A549 (cell line): ENCODE measurements at regions of chr2 and their contacts with region 1.

Region 1: DNA sequence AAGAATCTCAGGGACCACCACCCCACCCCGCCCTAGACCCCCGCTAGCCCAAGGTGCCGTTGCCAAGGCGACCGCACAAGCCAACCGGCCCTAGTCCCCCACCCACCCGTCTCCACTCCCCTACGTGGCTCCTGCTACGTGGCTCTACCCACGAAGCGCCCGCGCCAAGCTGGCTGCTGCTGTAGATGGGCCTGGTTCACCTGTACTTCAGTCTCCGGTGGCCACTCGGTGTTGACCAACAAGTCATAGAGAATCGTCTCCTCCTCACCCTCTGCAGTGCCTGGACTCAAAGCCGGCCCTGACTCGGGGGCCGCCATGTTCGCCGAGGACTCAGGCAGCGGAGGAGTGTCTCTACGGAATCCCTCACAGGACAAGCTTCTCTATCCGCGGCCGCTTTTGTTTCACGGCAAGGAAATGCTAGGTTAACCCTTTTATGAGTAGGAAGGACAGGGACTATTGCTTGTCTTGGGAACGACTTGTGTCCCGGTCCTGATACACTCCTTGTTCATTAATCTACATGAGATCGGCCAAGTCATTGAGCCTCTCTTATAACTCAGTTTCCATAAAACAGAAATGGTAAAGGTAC is at the start of gene NBAS:
- DNase-seq: peak; percentile 82 to 92
- ATAC-seq: peak; percentile 92 to 95
- H3K4me3 ChIP-seq: peak within 1 kb of the TSS; percentile 64
- H3K27ac ChIP-seq: peak within 1 kb of the TSS; percentile 76 to 81
- H3K4me1 ChIP-seq: peaks cover 10% of the 10 kb centered on the region
- CTCF ChIP-seq: no peak
- EP300 ChIP-seq: no peak
- POLR2A ChIP-seq: peak; percentile 85
- RAD21 ChIP-seq: no peak
- polyA plus RNA-seq, gene NBAS: 34.9 and 45.1 TPM in 2 replicates

Region 2: DNA sequence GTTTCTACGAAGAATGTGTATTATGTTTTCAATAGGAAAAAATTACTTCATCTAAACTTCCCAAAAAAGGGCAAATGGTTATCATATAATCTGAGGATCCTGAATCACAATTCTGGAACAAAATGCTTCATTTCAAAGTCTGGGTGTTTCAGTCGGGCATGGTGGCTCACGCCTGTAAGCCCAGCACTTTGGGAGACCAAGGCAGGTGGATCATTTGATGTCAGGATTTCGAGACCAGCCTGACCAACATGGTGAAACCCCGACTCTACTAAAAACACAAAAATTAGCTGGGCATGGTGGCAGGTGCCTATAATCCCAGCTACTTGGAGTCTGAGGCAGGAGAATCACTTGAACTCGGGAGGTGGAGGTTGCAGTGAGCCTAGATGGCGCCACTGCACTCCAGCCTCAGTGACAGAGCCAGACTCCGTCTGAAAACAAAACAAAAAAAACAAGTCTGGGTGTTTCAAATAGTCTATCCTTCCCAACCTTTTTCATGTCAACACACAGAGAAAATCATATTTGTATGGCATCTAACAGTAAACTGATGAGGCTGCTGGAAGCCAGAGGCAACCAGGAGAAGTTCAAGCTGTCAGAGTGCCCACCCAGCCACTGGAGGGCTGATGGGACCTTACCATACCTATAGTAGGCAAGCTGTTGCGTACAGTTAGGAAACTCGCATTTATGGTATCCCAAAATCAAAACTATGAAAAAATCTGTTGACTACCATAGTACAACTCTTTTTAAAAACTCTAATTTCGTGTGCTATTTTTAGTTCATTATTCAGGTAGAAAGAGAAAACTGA is 14.6 kb before region 1 on chr2:
- CTCF ChIA-PET with region 1: interaction called, 28 read pairs
- POLR2A ChIA-PET with region 1: no interaction called
- DNase-seq: no peak
- ATAC-seq: peak in 1 of 2 experiments; percentile 75; a peak in 4 of 6 replicates
- H3K4me3 ChIP-seq: no peak overlapping the region
- H3K27ac ChIP-seq: no peak overlapping the region
- H3K4me1 ChIP-seq: no peaks in the 10 kb centered on the region
- CTCF ChIP-seq: peak; percentile 62
- EP300 ChIP-seq: no peak
- POLR2A ChIP-seq: no peak
- RAD21 ChIP-seq: no peak

Region 3: DNA sequence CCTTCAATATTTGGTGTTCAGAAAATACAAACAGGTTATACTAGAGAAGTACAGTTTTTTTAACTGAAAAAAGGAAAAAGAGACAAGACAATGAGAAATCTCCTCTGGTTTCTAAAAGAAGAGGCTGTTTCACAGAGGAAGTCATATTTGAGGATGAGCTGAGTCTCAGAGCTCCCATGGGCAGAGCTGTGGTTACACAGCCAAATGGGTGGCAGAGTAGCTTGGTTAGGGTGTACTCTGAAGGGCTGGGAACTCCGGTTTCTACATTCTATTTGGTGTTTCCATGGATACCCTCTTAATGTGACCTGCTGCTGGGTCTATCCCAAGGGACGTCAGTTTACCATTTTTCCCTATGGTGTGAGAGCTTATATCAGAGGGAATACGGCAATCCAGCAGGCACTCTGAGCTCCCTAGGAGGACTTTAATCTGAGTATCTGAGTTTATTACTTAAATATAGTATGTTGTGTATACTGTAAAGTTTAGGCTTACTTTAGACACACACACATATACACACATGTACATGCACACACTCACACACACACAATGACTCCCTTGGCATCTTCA is 1030.4 kb after region 1 on chr2:
- CTCF ChIA-PET with region 1: no interaction called
- POLR2A ChIA-PET with region 1: no interaction called
- DNase-seq: no peak
- ATAC-seq: no peak
- H3K4me3 ChIP-seq: no peak overlapping the region
- H3K27ac ChIP-seq: no peak overlapping the region
- H3K4me1 ChIP-seq: no peaks in the 10 kb centered on the region
- CTCF ChIP-seq: no peak
- EP300 ChIP-seq: no peak
- POLR2A ChIP-seq: no peak
- RAD21 ChIP-seq: no peak